ENCODE measurements at regions of chr1 and their contacts with region 1.

Region 1: GRCh38 chr1:208781391-208782045 is 537.3 kb upstream of the PLXNA2 start:
- H3K4me3 ChIP-seq: no peak overlapping the region
- H3K27ac ChIP-seq: no peak overlapping the region
- H3K4me1 ChIP-seq: no peaks in the 10 kb centered on the region
- CTCF ChIP-seq: no peak

Region 2: DNA sequence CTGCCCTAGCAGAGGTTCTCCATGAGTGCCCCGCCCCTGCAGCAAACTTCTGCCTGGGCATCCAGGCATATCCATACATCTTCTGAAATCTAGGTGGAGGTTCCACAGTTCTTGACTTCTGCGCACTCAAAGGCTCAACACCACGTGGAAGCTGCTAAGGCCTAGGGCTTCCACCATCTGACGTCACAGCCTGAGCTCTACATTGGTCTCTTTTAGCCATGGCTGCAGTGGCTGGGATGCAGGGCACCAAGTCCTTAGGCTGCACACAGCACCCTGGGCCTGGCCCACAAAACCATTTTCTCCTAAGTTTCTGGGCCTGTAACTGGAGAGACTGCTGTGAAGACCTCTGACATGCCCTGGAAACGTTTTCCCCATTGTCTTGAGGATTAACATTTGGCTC is 264.7 kb before region 1 on chr1:
- CTCF ChIA-PET with region 1: no interaction called
- POLR2A ChIA-PET with region 1: interaction called, 11 read pairs
- H3K4me3 ChIP-seq: no peak overlapping the region
- H3K27ac ChIP-seq: no peak overlapping the region
- H3K4me1 ChIP-seq: peaks cover 2% of the 10 kb centered on the region; the same call in 1 of the 2 replicates
- CTCF ChIP-seq: no peak

Measured in HEK293 (cell line).